ENCODE measurements at regions of chr12 and their contacts with region 1.

Region 1: GRCh38 chr12:84161296-84161695 is 751.3 kb downstream of the SLC6A15 start:
- DNase-seq: no peak
- H3K4me3 ChIP-seq: no peak overlapping the region
- H3K27ac ChIP-seq: no peak overlapping the region
- H3K4me1 ChIP-seq: no peaks in the 10 kb centered on the region
- H3K27me3 ChIP-seq: no peaks in the 10 kb centered on the region
- CTCF ChIP-seq: no peak
- POLR2A ChIP-seq: no peak

Region 2: DNA sequence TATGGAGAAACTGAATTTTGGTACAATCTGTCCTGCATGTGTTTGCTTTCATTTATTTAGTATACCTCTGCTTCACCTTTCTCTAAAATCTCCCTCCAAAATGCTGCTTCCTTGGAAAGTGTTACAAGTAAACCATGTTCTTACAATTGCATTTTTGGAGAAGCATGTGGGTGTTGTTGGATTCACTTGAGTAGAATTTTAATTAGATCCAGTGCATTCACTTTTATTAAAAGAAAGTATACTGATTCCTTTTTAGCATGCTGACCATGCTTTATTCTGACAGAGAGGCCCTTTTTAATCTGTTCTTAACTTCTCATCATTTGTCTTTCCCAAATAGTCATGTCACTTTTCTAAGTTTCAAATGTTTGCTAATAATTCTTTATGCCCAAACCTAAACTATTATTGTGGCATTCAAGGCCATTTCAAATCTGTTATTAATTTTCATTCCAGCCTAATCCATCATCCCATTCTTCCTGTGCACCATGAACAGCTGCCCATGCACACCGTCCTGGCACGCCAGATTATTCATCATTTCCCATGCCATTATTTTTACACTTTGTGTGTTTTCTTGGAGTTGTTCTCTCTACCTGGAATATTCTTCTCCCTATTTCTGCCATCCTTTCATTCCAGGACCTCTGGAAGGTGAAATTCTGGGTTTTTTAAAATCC is 1712.3 kb before region 1 on chr12:
- intact Hi-C with region 1: no loop called
- DNase-seq: no peak
- H3K4me3 ChIP-seq: no peak overlapping the region
- H3K27ac ChIP-seq: no peak overlapping the region
- H3K4me1 ChIP-seq: no peaks in the 10 kb centered on the region
- H3K27me3 ChIP-seq: no peaks in the 10 kb centered on the region
- CTCF ChIP-seq: no peak
- POLR2A ChIP-seq: no peak

Region 3: GRCh38 chr12:84412226-84412625 is 250.9 kb after region 1 on chr12:
- intact Hi-C with region 1: loop called (anchors 5 kb)
- DNase-seq: no peak
- H3K4me3 ChIP-seq: no peak overlapping the region
- H3K27ac ChIP-seq: no peak overlapping the region
- H3K4me1 ChIP-seq: no peaks in the 10 kb centered on the region
- H3K27me3 ChIP-seq: no peaks in the 10 kb centered on the region
- CTCF ChIP-seq: no peak
- POLR2A ChIP-seq: no peak